ENCODE measurements at regions of chr22 and their contacts with region 1.

Region 1: GRCh38 chr22:17368554-17369438 is 464 bp upstream of the CECR2 start:
- DNase-seq: peak in 5 of 14 experiments; percentile 1 to 33 (median 29)
- ATAC-seq: peak; percentile 26
- H3K4me3 ChIP-seq: peak overlapping the region; percentile 43
- H3K4me3 Mint-ChIP-seq: peak overlapping the region; percentile 81
- H3K27ac ChIP-seq: no peak overlapping the region
- H3K27ac Mint-ChIP-seq: no peak overlapping the region
- H3K4me1 ChIP-seq: peaks cover 17% of the 10 kb centered on the region
- H3K4me1 Mint-ChIP-seq: peaks cover 29% of the 10 kb centered on the region
- H3K27me3 ChIP-seq: peaks cover 32 to 56% of the 10 kb centered on the region in 2 experiments
- H3K27me3 Mint-ChIP-seq: peaks cover 70% of the 10 kb centered on the region
- CTCF ChIP-seq: no peak

Region 2: DNA sequence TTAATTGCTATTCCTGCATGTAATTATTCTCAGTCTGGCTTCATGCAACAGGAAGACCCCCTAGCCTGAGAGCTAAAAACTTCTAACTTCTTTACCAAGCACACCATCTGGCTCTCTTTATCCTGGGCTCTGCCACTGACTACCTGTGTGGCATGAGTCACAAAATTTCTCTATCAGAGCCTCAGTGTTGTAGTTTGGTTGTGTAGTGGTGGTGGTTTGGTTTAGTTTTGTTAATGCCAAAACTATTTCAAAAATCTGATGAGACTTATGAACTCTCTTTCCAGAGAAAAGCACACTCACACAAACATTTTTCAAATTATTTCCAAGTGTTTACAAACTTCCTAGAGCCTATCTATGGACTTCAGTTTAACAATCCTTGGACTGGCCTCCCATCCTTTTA is 291.5 kb before region 1 on chr22:
- CTCF ChIA-PET with region 1: no interaction called
- POLR2A ChIA-PET with region 1: no interaction called
- intact Hi-C with region 1: loop called in 1 of 2 experiments (anchors 5 kb)
- DNase-seq: no peak
- ATAC-seq: no peak
- H3K4me3 ChIP-seq: no peak overlapping the region
- H3K4me3 Mint-ChIP-seq: no peak overlapping the region
- H3K27ac ChIP-seq: no peak overlapping the region
- H3K27ac Mint-ChIP-seq: no peak overlapping the region
- H3K4me1 ChIP-seq: peaks cover 11% of the 10 kb centered on the region
- H3K4me1 Mint-ChIP-seq: peaks cover 17% of the 10 kb centered on the region
- H3K27me3 ChIP-seq: no peaks in the 10 kb centered on the region
- H3K27me3 Mint-ChIP-seq: no peaks in the 10 kb centered on the region
- CTCF ChIP-seq: no peak

Region 3: DNA sequence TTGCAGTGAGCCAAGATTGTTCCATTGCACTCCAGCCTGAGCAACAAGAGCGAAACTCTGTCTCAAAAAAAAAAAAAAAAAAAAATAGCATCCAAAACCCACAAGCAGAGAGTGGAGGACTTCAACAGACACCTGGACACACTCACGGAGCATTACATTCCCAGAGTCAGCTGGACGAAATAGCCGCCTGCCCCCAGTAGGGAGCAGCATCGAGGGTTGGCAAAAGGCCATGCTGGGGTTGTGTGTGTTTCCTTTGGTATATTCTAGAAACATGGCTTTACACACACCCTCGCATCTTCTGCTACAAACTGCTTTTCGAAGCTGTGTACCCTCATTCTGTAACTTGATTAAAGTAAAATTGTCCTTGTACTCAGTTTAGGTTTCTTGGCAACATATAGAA is 154.8 kb before region 1 on chr22:
- CTCF ChIA-PET with region 1: no interaction called
- POLR2A ChIA-PET with region 1: no interaction called
- intact Hi-C with region 1: loop called (anchors 5 to 10 kb)
- DNase-seq: peak; percentile 31 to 77 (median 58)
- ATAC-seq: peak; percentile 40
- H3K4me3 ChIP-seq: no peak overlapping the region
- H3K4me3 Mint-ChIP-seq: peak overlapping the region; percentile 76
- H3K27ac ChIP-seq: peak overlapping the region in 1 of 2 donors; percentile 31
- H3K27ac Mint-ChIP-seq: peak overlapping the region; percentile 86
- H3K4me1 ChIP-seq: peaks cover 40% of the 10 kb centered on the region
- H3K4me1 Mint-ChIP-seq: peaks cover 65% of the 10 kb centered on the region
- H3K27me3 ChIP-seq: no peaks in the 10 kb centered on the region
- H3K27me3 Mint-ChIP-seq: no peaks in the 10 kb centered on the region
- CTCF ChIP-seq: peak; percentile 37

Region 4: DNA sequence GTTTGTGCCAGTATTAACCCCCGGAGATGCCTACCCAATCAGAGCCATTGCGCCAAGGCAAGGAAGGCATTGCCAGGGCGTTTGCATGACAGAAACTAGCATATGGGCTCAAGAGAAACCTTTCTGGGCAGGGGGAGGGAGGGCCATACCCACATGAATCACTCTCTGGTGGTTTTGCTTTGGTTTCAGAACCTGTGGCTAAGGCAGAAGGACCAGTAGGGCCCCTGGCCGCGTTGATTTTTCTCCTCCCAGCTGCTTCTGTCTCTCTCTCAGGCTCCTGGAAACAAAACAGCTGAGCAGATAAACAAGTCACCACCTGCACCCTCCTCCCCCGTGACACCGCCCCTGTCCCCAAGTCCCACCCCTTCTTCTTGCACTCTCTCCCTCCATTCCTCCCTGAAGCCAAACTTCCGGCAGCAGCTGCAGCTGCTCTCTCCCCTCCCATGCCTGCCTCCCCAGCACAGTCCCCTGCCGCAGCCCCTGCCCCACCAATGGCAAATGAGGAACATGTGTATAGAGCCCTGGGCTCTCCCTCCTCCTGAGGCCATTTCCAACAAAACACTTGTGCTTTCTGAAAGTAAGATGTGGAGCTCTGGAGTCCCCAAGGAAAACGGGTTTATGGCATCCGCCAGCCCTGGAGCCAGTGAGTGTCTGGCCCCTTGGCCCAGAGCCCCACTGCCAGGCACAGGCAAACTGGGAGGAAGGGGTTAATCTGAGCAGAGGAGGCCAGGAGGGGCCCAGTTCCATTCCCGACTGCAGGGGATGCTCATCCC is 110.6 kb before region 1 on chr22:
- CTCF ChIA-PET with region 1: no interaction called
- POLR2A ChIA-PET with region 1: interaction called, 4 read pairs
- intact Hi-C with region 1: loop called in 1 of 2 experiments (anchors 5 kb)
- DNase-seq: peak; percentile 16 to 74 (median 50)
- ATAC-seq: peak; percentile 92
- H3K4me3 ChIP-seq: peak overlapping the region; percentile 35
- H3K4me3 Mint-ChIP-seq: peak overlapping the region; percentile 65
- H3K27ac ChIP-seq: peak overlapping the region in 1 of 2 donors; percentile 18
- H3K27ac Mint-ChIP-seq: peak overlapping the region; percentile 81
- H3K4me1 ChIP-seq: peaks cover 23% of the 10 kb centered on the region
- H3K4me1 Mint-ChIP-seq: peaks cover 21% of the 10 kb centered on the region
- H3K27me3 ChIP-seq: no peaks in the 10 kb centered on the region
- H3K27me3 Mint-ChIP-seq: no peaks in the 10 kb centered on the region
- CTCF ChIP-seq: no peak

Region 5: GRCh38 chr22:17422736-17423343 is 54.0 kb after region 1 on chr22:
- CTCF ChIA-PET with region 1: no interaction called
- POLR2A ChIA-PET with region 1: interaction called, 3 read pairs
- intact Hi-C with region 1: loop called in 1 of 2 experiments (anchors 10 kb)
- DNase-seq: no peak
- ATAC-seq: no peak
- H3K4me3 ChIP-seq: no peak overlapping the region
- H3K4me3 Mint-ChIP-seq: no peak overlapping the region
- H3K27ac ChIP-seq: no peak overlapping the region
- H3K27ac Mint-ChIP-seq: no peak overlapping the region
- H3K4me1 ChIP-seq: no peaks in the 10 kb centered on the region
- H3K4me1 Mint-ChIP-seq: no peaks in the 10 kb centered on the region
- H3K27me3 ChIP-seq: no peaks in the 10 kb centered on the region
- H3K27me3 Mint-ChIP-seq: peaks cover under 1% of the 10 kb centered on the region
- CTCF ChIP-seq: no peak

Region 6: DNA sequence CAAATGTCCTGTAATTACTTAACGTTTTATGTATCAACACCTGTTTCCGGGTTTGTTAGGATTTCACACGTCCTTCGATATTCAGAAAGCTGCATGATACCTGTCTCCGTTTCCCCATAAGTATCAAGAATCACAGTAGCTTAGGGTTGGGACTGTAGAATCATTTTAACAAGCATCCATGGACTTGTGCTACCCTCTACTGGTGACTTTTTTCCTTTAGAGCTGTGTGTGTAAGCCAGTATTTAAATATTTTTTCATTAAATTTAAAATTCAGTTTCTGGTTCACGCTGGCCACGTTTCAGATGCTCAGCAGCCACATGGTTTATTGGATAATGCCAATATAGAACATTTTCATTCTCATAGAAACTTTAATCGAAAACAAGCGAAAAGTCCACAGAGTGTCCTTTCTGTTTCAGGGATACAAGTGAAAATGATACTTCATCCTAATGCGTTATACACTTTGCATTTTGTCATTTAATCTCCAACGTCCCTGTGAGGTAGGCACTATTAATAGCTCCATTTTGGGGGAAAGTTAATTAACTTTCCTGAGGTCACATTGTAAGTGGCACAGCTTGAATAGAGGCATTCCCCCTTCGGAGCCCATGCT is 133.0 kb after region 1 on chr22:
- CTCF ChIA-PET with region 1: no interaction called
- POLR2A ChIA-PET with region 1: no interaction called
- intact Hi-C with region 1: loop called in 1 of 2 experiments (anchors 5 kb)
- DNase-seq: peak in 9 of 14 experiments; percentile 2 to 79 (median 10)
- ATAC-seq: peak; percentile 76
- H3K4me3 ChIP-seq: no peak overlapping the region
- H3K4me3 Mint-ChIP-seq: no peak overlapping the region
- H3K27ac ChIP-seq: no peak overlapping the region
- H3K27ac Mint-ChIP-seq: no peak overlapping the region
- H3K4me1 ChIP-seq: no peaks in the 10 kb centered on the region
- H3K4me1 Mint-ChIP-seq: no peaks in the 10 kb centered on the region
- H3K27me3 ChIP-seq: peaks cover 0 to 2% of the 10 kb centered on the region in 2 experiments
- H3K27me3 Mint-ChIP-seq: peaks cover 4% of the 10 kb centered on the region
- CTCF ChIP-seq: peak; percentile 82

Measured in CD4-positive, alpha-beta T cell (primary cell).